BJ (cell line): ENCODE measurements at regions of chr11 and their contacts with region 1.

Region 1: GRCh38 chr11:123707606-123708205 is 33.8 kb downstream of the ZNF202 start:
- DNase-seq: no peak
- H3K4me3 ChIP-seq: no peak overlapping the region
- H3K27me3 ChIP-seq: peaks cover 3% of the 10 kb centered on the region
- CTCF ChIP-seq: peak; percentile 83

Region 2: GRCh38 chr11:123330071-123330470 is 377.6 kb before region 1 on chr11:
- CTCF ChIA-PET with region 1: no interaction called
- POLR2A ChIA-PET with region 1: no interaction called
- DNase-seq: no peak
- H3K4me3 ChIP-seq: no peak overlapping the region
- H3K27me3 ChIP-seq: peaks cover 2% of the 10 kb centered on the region
- CTCF ChIP-seq: no peak

Region 3: GRCh38 chr11:123580557-123581275 is 127.0 kb before region 1 on chr11:
- CTCF ChIA-PET with region 1: interaction called, 148 read pairs
- POLR2A ChIA-PET with region 1: no interaction called
- DNase-seq: no peak
- H3K4me3 ChIP-seq: no peak overlapping the region
- H3K27me3 ChIP-seq: no peaks in the 10 kb centered on the region
- CTCF ChIP-seq: peak; percentile 97

Region 4: GRCh38 chr11:123640677-123641494 is 66.8 kb before region 1 on chr11:
- CTCF ChIA-PET with region 1: interaction called, 207 read pairs
- POLR2A ChIA-PET with region 1: no interaction called
- DNase-seq: no peak
- H3K4me3 ChIP-seq: no peak overlapping the region
- H3K27me3 ChIP-seq: peaks cover 6% of the 10 kb centered on the region
- CTCF ChIP-seq: peak; percentile 91

Region 5: GRCh38 chr11:123654566-123655081 is 53.1 kb before region 1 on chr11 and contains the start of gene SCN3B:
- CTCF ChIA-PET with region 1: interaction called, 31 read pairs
- POLR2A ChIA-PET with region 1: no interaction called
- DNase-seq: no peak
- H3K4me3 ChIP-seq: peak within 1 kb of the TSS; percentile 67
- H3K27me3 ChIP-seq: peaks cover 4% of the 10 kb centered on the region
- CTCF ChIP-seq: no peak
- polyA plus RNA-seq, gene SCN3B: 0.16 and 0.18 TPM in 2 replicates

Region 6: GRCh38 chr11:123719452-123719851 is 11.7 kb after region 1 on chr11:
- CTCF ChIA-PET with region 1: interaction called, 25 read pairs
- POLR2A ChIA-PET with region 1: no interaction called
- DNase-seq: no peak
- H3K4me3 ChIP-seq: no peak overlapping the region
- H3K27me3 ChIP-seq: no peaks in the 10 kb centered on the region; the same call in 1 of the 2 replicates
- CTCF ChIP-seq: no peak

Region 7: DNA sequence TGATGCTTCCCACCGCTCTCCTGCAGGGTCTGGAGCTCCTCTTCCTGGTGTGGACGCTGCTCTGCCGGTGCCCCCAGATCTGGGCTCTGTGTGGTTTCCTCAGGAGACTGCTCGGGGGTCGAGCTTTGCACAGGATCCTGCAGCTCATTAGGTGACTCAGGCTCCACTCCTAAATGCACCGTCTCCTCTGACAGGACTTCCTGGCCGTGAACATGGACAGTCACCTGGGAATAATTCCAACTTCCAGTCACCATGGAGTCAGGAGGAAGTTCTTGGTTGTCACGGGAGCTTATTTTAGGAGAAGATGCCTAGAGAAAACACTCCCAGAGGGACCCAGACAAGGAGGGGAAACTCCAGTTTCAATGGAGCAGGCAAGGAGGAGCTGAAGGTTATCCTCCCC is 21.9 kb after region 1 on chr11:
- CTCF ChIA-PET with region 1: interaction called, 13 read pairs
- POLR2A ChIA-PET with region 1: no interaction called
- DNase-seq: no peak
- H3K4me3 ChIP-seq: no peak overlapping the region
- H3K27me3 ChIP-seq: no peaks in the 10 kb centered on the region
- CTCF ChIP-seq: no peak

Region 8: DNA sequence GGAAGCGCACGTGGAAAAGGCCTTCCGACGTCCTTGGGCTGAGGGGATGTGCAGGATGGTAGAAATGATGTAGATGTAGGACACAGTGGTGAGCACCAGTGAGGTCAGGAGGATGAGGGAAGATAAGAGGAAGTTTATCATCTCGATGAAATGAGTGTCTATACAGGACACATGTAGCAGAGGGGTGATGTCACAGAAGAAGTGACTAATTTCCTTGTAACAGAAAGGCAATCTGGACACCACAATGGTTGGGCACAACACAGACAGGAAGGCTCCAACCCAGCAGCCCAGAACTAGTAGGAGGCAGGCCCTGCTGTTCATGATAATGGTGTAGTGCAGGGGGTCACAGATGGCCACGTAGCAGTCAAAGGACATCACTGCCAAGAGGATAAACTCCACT is 133.5 kb after region 1 on chr11:
- CTCF ChIA-PET with region 1: no interaction called
- POLR2A ChIA-PET with region 1: no interaction called
- DNase-seq: no peak
- H3K4me3 ChIP-seq: no peak overlapping the region
- H3K27me3 ChIP-seq: no peaks in the 10 kb centered on the region
- CTCF ChIP-seq: no peak